ENCODE measurements at regions of chr5 and their contacts with region 1.

Region 1: DNA sequence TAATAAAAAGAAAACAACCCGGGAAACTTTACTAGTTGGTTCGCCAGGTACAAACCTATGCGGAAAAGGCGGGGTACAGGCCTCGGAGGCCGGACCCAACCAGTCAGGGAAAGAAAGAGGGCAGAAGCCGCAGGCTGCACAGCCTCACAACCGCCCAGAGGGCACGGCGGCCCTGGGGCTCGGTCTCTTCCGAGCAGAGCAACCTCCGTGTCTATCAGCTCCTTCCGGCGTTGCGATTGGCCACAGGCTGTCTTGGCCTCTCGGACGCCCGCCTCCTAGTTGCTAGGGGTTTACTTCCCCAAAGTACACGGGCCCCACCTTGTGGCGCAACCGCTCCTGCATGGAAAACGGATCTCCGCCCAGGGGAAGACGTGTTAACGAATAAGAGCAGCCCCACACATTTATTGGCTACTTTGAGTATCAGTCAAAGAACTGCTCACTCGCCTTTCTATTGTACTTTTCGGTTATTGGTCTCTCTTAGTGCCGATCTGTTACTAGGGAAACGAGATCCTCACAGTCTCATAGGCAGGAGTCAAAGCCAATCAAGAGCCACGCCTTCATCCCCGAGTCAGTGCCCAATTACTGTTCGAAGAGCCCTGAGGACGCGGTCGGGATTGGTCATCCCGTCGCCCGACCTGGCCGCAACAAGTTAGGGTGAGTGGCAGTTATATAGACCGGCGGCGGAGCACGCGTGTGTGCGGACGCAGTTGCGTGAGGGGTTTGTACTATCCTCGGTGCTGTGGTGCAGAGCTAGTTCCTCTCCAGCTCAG is at the start of gene G3BP1:
- DNase-seq: peak; percentile 86 to 100 (median 99)
- ATAC-seq: peak; percentile 86
- H3K4me3 ChIP-seq: peak within 1 kb of the TSS; percentile 93
- H3K4me3 Mint-ChIP-seq: peak within 1 kb of the TSS in 7 of 10 donors; percentile 89 to 97 (median 94)
- H3K27ac ChIP-seq: peak within 1 kb of the TSS; percentile 87
- H3K27ac Mint-ChIP-seq: peak within 1 kb of the TSS in 5 of 9 donors; percentile 79 to 94 (median 87)
- H3K4me1 ChIP-seq: peaks cover 31 to 39% of the 10 kb centered on the region in 2 donors
- H3K4me1 Mint-ChIP-seq: peaks cover 24 to 55% (median 43%) of the 10 kb centered on the region in 7 donors
- H3K27me3 ChIP-seq: no peaks in the 10 kb centered on the region
- H3K27me3 Mint-ChIP-seq: no peaks in the 10 kb centered on the region
- total RNA-seq, gene G3BP1: 86.1 to 244 (median 167) TPM

Region 2: GRCh38 chr5:149960272-149961185 is 1810.9 kb before region 1 on chr5 and contains the start of gene SLC26A2:
- CTCF ChIA-PET with region 1: no interaction called
- POLR2A ChIA-PET with region 1: no interaction called
- intact Hi-C with region 1: loop called in 1 of 2 experiments (anchors 2 kb)
- DNase-seq: peak; percentile 78 to 92 (median 91)
- ATAC-seq: peak; percentile 99
- H3K4me3 ChIP-seq: peak within 1 kb of the TSS; percentile 98
- H3K4me3 Mint-ChIP-seq: peak within 1 kb of the TSS; percentile 90 to 100 (median 96)
- H3K27ac ChIP-seq: peak within 1 kb of the TSS; percentile 77
- H3K27ac Mint-ChIP-seq: peak within 1 kb of the TSS; percentile 94 to 98 (median 97)
- H3K4me1 ChIP-seq: peaks cover 16 to 28% of the 10 kb centered on the region in 2 donors
- H3K4me1 Mint-ChIP-seq: peaks cover 14 to 43% (median 37%) of the 10 kb centered on the region in 7 donors
- H3K27me3 ChIP-seq: no peaks in the 10 kb centered on the region
- H3K27me3 Mint-ChIP-seq: no peaks in the 10 kb centered on the region
- total RNA-seq, gene SLC26A2: 5.2 to 16.5 (median 9.6) TPM

Region 3: GRCh38 chr5:150449517-150450339 is 1321.7 kb before region 1 on chr5 and contains the start of gene RPS14:
- CTCF ChIA-PET with region 1: no interaction called
- POLR2A ChIA-PET with region 1: interaction called, 4 read pairs
- intact Hi-C with region 1: loop called (anchors 1 to 10 kb)
- DNase-seq: peak; percentile 89 to 98 (median 97)
- ATAC-seq: peak; percentile 97
- H3K4me3 ChIP-seq: peak within 1 kb of the TSS; percentile 68
- H3K4me3 Mint-ChIP-seq: peak within 1 kb of the TSS; percentile 89 to 100 (median 96)
- H3K27ac ChIP-seq: peak within 1 kb of the TSS; percentile 100
- H3K27ac Mint-ChIP-seq: peak within 1 kb of the TSS; percentile 97 to 100 (median 100)
- H3K4me1 ChIP-seq: peaks cover 18 to 23% of the 10 kb centered on the region in 2 donors
- H3K4me1 Mint-ChIP-seq: peaks cover 21 to 44% (median 37%) of the 10 kb centered on the region in 7 donors
- H3K27me3 ChIP-seq: no peaks in the 10 kb centered on the region
- H3K27me3 Mint-ChIP-seq: no peaks in the 10 kb centered on the region
- total RNA-seq, gene RPS14: 2,331 to 7,378 (median 6,414) TPM

Region 4: DNA sequence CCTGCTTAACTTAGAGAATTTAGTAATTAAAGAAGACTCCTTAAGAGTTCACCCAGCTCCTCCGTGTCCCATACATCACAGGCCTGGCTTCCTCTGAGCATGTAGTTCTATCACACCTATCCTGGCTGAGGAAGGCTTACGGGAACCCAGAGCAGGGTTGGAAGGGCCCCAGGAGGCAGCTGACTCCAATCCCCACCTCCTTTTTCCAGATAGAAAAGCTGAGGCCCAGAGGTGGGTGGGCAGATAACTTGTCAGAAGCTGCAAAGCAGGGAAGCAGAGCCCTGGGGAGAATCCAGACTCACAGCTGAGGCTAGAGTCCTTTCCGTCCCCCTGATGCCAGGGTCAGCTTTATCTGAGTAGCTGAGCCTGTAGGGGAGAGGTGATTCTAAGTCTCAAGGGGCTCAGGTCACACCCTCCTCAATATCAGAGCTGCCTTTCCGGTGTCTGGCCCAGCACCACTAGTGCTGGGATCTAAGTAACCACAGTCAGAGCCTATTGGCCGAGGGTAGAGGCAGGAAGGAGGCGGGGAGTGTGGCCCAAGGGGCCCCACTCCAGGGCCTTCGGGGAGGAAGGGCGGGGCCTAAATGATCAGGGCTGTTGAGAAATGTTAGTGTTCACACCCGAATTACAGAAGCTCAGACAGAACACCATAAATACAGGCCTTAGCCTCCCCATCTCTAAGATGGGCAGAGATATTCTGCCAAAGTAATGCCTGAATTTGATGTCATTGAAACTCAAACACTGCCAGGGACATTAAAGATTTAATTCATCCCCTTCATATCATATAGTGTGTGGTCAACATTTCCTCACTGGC is 557.4 kb before region 1 on chr5:
- CTCF ChIA-PET with region 1: interaction called, 3 read pairs
- POLR2A ChIA-PET with region 1: interaction called, 4 read pairs
- intact Hi-C with region 1: loop called (anchors 1 to 2 kb)
- DNase-seq: peak; percentile 53 to 85 (median 79)
- ATAC-seq: peak; percentile 90
- H3K4me3 ChIP-seq: peak overlapping the region; percentile 74
- H3K4me3 Mint-ChIP-seq: peak overlapping the region; percentile 80 to 93 (median 89)
- H3K27ac ChIP-seq: peak overlapping the region; percentile 93
- H3K27ac Mint-ChIP-seq: peak overlapping the region; percentile 90 to 98 (median 97)
- H3K4me1 ChIP-seq: peaks cover 80 to 82% of the 10 kb centered on the region in 2 donors
- H3K4me1 Mint-ChIP-seq: peaks cover 56 to 95% (median 84%) of the 10 kb centered on the region in 7 donors
- H3K27me3 ChIP-seq: no peaks in the 10 kb centered on the region
- H3K27me3 Mint-ChIP-seq: no peaks in the 10 kb centered on the region

Region 5: DNA sequence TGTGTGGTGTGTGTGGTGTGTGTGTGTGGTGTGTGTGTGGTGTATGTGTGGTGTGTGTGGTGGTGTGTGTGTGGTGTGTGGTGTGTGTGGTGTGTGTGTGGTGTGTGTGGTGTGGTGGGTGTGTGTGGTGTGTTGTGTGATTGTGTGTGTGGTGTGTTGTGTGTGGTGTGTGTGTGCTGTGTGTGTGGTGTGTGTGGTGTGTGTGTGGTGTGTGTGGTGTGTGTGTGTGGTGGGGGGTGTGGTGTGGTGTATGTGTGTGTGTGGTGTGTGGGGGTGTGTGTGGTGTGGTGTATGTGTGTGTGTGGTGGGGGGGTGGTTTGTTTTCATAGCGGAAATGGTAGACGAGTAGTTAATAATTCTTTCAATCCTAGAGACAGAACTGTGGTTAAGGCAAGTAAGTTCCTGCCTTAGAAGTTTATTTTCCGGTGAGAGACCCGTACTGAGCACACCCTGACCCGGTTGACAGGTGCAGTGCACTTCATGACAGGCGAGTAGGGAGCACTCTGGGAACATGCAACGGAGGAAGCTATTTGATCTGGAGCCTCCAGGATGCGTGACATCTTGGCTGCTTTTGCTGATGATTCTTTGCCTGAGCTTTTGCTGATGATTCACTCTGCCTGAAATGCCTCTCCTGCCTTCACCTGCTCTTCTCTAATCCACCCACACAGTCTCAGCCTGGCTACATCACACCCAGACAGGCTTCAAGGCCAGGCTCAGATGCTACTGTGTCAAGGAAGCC is 158.6 kb before region 1 on chr5:
- CTCF ChIA-PET with region 1: no interaction called
- POLR2A ChIA-PET with region 1: interaction called, 4 read pairs
- intact Hi-C with region 1: loop called in 1 of 2 experiments (anchors 1 kb)
- DNase-seq: peak in 6 of 9 donors; percentile 52 to 81 (median 60)
- ATAC-seq: peak; percentile 75
- H3K4me3 ChIP-seq: peak overlapping the region; percentile 37
- H3K4me3 Mint-ChIP-seq: peak overlapping the region in 8 of 10 donors; percentile 59 to 93 (median 78)
- H3K27ac ChIP-seq: peak overlapping the region; percentile 57
- H3K27ac Mint-ChIP-seq: peak overlapping the region in 7 of 9 donors; percentile 71 to 98 (median 87)
- H3K4me1 ChIP-seq: peaks cover 19 to 49% of the 10 kb centered on the region in 2 donors
- H3K4me1 Mint-ChIP-seq: peaks cover 4 to 73% (median 58%) of the 10 kb centered on the region in 7 donors
- H3K27me3 ChIP-seq: no peaks in the 10 kb centered on the region
- H3K27me3 Mint-ChIP-seq: peaks cover 0 to 8% (median 3%) of the 10 kb centered on the region in 5 donors

Region 6: GRCh38 chr5:151786468-151786867 is 15.0 kb after region 1 on chr5:
- CTCF ChIA-PET with region 1: no interaction called
- POLR2A ChIA-PET with region 1: interaction called, 19 read pairs
- intact Hi-C with region 1: loop called (anchors 1 to 2 kb)
- DNase-seq: no peak
- ATAC-seq: no peak
- H3K4me3 ChIP-seq: no peak overlapping the region
- H3K4me3 Mint-ChIP-seq: peak overlapping the region in 3 of 10 donors; percentile 44 to 45 (median 44)
- H3K27ac ChIP-seq: no peak overlapping the region
- H3K27ac Mint-ChIP-seq: peak overlapping the region in 6 of 9 donors; percentile 10 to 82 (median 56)
- H3K4me1 ChIP-seq: peaks cover 7 to 21% of the 10 kb centered on the region in 2 donors
- H3K4me1 Mint-ChIP-seq: peaks cover 26 to 68% (median 61%) of the 10 kb centered on the region in 7 donors
- H3K27me3 ChIP-seq: no peaks in the 10 kb centered on the region
- H3K27me3 Mint-ChIP-seq: no peaks in the 10 kb centered on the region

Region 7: GRCh38 chr5:153018121-153018520 is 1246.7 kb after region 1 on chr5:
- CTCF ChIA-PET with region 1: no interaction called
- POLR2A ChIA-PET with region 1: no interaction called
- intact Hi-C with region 1: no loop called
- DNase-seq: no peak
- ATAC-seq: no peak
- H3K4me3 ChIP-seq: no peak overlapping the region
- H3K4me3 Mint-ChIP-seq: no peak overlapping the region
- H3K27ac ChIP-seq: no peak overlapping the region
- H3K27ac Mint-ChIP-seq: no peak overlapping the region
- H3K4me1 ChIP-seq: no peaks in the 10 kb centered on the region
- H3K4me1 Mint-ChIP-seq: no peaks in the 10 kb centered on the region
- H3K27me3 ChIP-seq: no peaks in the 10 kb centered on the region
- H3K27me3 Mint-ChIP-seq: no peaks in the 10 kb centered on the region